Activated T-helper 2 cell treated with anti-CD3 and anti-CD28 coated beads, Interferon-gamma antibody, Interleukin-2, Interleukin-4, amounts not matched to agents 10 μg/mL and 5 μg/mL and 100 μg/mL, durations not matched to agents 14 hours and 24 hours and 36 hours (primary cell): ENCODE measurements at regions of chr16 and their contacts with region 1.

Region 1: GRCh38 chr16:88686439-88687253 is at the start of gene SNAI3:
- DNase-seq: peak; percentile 85
- H3K4me3 Mint-ChIP-seq: peak within 1 kb of the TSS; percentile 74
- H3K27ac Mint-ChIP-seq: no peak within 1 kb of the TSS
- H3K4me1 Mint-ChIP-seq: peaks cover 32% of the 10 kb centered on the region
- H3K27me3 Mint-ChIP-seq: no peaks in the 10 kb centered on the region
- total RNA-seq, gene SNAI3: 2.0 and 2.3 TPM in 2 replicates

Region 2: DNA sequence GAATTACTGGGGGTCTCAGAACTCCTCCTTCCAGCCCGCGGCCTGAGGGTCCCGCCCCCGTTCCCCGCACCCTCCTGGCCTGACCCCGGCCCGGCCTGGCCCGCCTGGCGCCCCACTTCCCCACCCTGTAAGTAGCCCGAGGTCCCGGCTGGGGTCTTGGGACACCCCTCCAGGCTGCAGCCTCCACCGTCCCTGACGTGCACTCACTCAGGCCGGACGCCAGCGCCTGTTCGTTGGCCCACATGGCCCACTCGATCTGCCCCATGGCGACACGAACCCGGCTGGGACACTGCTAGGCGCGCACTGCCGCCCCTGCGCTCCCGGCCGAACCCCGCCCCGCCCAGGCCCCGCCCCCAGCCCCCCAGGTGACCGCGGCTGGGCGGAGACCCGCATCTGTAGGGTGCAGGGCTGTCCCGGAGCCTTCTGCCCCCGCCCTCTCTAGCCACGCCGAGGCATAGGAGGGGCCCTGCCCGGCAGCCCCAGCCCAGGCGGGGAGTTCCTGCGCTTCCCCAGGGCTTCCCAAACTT is 35.8 kb before region 1 on chr16 and contains the start of gene CYBA:
- intact Hi-C with region 1: loop called (anchors 1 kb)
- DNase-seq: peak; percentile 86
- H3K4me3 Mint-ChIP-seq: peak within 1 kb of the TSS; percentile 87
- H3K27ac Mint-ChIP-seq: peak within 1 kb of the TSS; percentile 95
- H3K4me1 Mint-ChIP-seq: peaks cover 12% of the 10 kb centered on the region
- H3K27me3 Mint-ChIP-seq: no peaks in the 10 kb centered on the region
- total RNA-seq, gene CYBA: 233 and 242 TPM in 2 replicates